Right ventricle myocardium superior (tissue), 1 donor: ENCODE measurements at regions of chr7 and their contacts with region 1.

Region 1: GRCh38 chr7:35253710-35254495 is at the start of gene TBX20:
- DNase-seq: peak; percentile 91
- ATAC-seq: peak; percentile 80
- total RNA-seq, gene TBX20: 124 TPM

Region 2: DNA sequence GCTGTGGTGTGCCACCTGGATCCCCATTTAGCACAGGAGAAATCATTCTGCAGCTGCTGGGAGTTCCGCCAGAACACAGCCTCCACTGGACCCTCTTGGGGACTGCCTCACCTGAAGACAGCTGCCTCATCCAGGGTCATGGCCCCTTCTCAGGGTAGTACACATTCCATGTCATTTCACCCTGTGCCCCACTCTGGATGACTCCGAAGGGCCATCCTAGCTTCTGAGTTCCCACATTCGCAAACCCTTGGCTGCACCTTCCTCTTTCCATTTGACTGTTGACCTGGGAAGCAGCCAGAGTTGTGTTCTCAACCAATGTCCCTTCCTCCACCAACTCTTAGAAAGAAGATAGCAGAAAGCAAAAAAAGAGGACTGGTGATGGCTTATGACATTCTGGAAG is 125.6 kb after region 1 on chr7:
- intact Hi-C with region 1: loop called (anchors 5 kb)
- DNase-seq: no peak
- ATAC-seq: peak; percentile 11

Region 3: GRCh38 chr7:35424869-35425495 is 171.1 kb after region 1 on chr7:
- intact Hi-C with region 1: loop called (anchors 10 kb)
- DNase-seq: peak; percentile 72
- ATAC-seq: peak; percentile 79

Region 4: GRCh38 chr7:35519971-35520809 is 266.3 kb after region 1 on chr7:
- intact Hi-C with region 1: loop called (anchors 5 kb)
- DNase-seq: peak; percentile 90
- ATAC-seq: peak; percentile 93